ENCODE measurements at regions of chr2 and their contacts with region 1.

Region 1: GRCh38 chr2:160429248-160430000 is 64.2 kb downstream of the RBMS1 start:
- DNase-seq: no peak
- ATAC-seq: peak in 2 of 8 donors; percentile 35 to 53
- H3K4me3 ChIP-seq: no peak overlapping the region
- H3K27ac ChIP-seq: peak overlapping the region in 8 of 10 donors; percentile 59 to 79 (median 68)
- H3K4me1 ChIP-seq: peaks cover 10 to 82% (median 69%) of the 10 kb centered on the region in 9 donors
- H3K27me3 ChIP-seq: no peaks in the 10 kb centered on the region
- CTCF ChIP-seq: peak; percentile 45 to 74 (median 64)

Region 2: GRCh38 chr2:160324161-160324800 is 105.1 kb before region 1 on chr2:
- intact Hi-C with region 1: loop called in 1 of 10 experiments (anchors 5 kb)
- DNase-seq: peak; percentile 51 to 67
- ATAC-seq: peak in 7 of 8 donors; percentile 31 to 62 (median 40)
- H3K4me3 ChIP-seq: no peak overlapping the region
- H3K27ac ChIP-seq: peak overlapping the region in 3 of 10 donors; percentile 9 to 82 (median 36)
- H3K4me1 ChIP-seq: peaks cover 0 to 97% (median 77%) of the 10 kb centered on the region in 9 donors
- H3K27me3 ChIP-seq: no peaks in the 10 kb centered on the region
- CTCF ChIP-seq: peak; percentile 47 to 85 (median 73)

Region 3: GRCh38 chr2:160482673-160483072 is 53.2 kb after region 1 on chr2:
- intact Hi-C with region 1: loop called in 2 of 10 experiments (anchors 10 kb)
- DNase-seq: no peak
- ATAC-seq: peak in 2 of 8 donors; percentile 46 to 64
- H3K4me3 ChIP-seq: no peak overlapping the region
- H3K27ac ChIP-seq: peak overlapping the region in 3 of 10 donors; percentile 12 to 45 (median 35)
- H3K4me1 ChIP-seq: peaks cover 0 to 88% (median 66%) of the 10 kb centered on the region in 9 donors
- H3K27me3 ChIP-seq: no peaks in the 10 kb centered on the region
- CTCF ChIP-seq: no peak

Region 4: DNA sequence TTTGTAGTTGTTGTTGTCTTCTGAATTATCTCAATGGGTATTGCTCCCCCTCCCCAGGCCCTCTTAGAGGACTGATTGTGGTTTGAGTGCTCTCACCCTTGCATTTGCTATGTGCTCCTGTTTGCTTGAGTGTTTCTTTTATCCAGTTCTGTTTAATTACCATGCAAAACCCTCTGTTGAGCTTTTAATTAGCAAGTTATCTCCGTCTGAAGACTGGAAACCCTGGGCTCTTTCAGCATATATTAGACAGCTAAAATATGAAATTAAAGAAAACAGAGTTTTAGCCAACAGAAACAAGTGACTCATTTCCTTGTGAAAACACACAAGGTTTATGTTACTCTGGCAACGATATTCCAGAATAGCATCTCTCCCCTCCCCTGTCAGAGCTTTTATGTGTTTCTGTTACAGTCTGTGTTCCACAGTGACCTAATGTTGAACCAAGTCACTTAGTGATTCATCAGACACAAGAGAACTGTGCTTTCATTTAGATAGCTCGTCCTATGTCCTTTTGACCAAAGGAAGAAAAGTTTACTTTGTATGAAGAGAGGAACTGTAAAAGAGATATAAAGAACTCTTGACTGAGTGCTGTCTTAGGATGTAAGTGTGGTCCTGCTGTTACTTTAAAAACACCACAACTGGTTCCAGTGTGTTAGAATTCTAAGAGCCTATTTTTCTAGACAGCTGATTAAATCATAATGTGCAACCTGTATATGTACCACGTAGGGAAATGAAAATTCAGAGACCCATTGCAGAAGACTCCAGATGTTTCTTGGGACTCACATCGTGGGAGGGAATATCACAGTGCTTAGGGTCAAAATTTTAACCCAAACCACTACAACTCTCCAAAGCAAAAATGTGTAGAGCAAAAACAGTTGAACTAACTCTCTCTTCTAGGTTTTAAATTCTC is 237.0 kb after region 1 on chr2:
- intact Hi-C with region 1: loop called in 2 of 10 experiments (anchors 10 kb)
- DNase-seq: peak in 1 of 2 donors; percentile 42
- ATAC-seq: peak; percentile 93 to 100 (median 96)
- H3K4me3 ChIP-seq: peak overlapping the region in 3 of 10 donors; percentile 6 to 29 (median 19)
- H3K27ac ChIP-seq: peak overlapping the region; percentile 18 to 75 (median 64)
- H3K4me1 ChIP-seq: peaks cover 5 to 35% (median 18%) of the 10 kb centered on the region in 9 donors
- H3K27me3 ChIP-seq: no peaks in the 10 kb centered on the region
- CTCF ChIP-seq: no peak

Region 5: DNA sequence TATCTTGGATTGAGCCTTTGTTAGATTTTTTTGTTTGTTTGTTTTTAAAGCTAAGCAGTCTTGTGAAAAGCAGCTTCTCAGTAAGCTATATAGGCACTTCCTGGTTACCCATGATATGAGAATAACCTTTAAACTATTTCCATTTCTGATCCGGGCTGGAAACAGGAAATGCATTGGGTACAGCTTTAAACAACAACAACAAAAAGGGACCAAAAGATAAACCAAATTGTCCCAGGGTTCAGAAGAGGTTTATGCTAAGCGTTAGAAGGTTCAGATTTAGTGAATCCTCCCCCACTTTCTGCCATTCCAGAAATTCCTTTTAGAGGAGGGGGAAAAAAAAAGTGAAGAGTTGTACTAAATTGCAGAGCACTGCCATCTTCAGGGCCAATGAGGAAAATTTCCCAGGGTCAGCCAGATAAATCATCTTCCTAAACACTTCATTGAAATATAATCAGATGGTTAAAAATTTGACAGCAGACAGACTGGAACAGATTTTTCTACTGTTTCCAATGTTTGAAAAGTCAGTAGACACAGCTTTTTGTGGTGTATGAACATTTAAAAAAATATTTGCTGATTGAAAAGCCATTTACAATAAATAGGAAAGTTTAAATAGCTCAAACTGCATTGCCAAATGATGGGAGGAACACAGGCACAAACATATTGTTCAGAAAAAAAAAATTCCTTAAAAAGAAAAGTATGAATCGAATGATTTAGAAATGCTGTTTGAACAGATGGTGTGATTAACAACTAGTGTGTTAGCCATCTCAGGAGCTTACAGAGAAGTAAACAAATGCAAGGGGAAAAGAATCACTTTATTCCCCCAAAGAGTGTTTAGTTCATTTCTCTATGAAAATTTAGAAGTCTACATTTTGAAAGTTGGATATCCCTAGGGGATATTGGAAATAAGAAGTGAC is 540.9 kb after region 1 on chr2:
- intact Hi-C with region 1: loop called in 4 of 10 experiments (anchors 5 to 10 kb)
- DNase-seq: peak in 1 of 2 donors; percentile 57
- ATAC-seq: peak; percentile 32 to 81 (median 74)
- H3K4me3 ChIP-seq: peak overlapping the region in 7 of 10 donors; percentile 9 to 40 (median 32)
- H3K27ac ChIP-seq: peak overlapping the region in 9 of 10 donors; percentile 14 to 75 (median 68)
- H3K4me1 ChIP-seq: peaks cover 0 to 24% (median 13%) of the 10 kb centered on the region in 9 donors
- H3K27me3 ChIP-seq: no peaks in the 10 kb centered on the region
- CTCF ChIP-seq: peak; percentile 49 to 86 (median 80)

Measured in heart right ventricle (tissue), 16 donors.